ENCODE measurements at regions of chr12 and their contacts with region 1.

Region 1: GRCh38 chr12:642633-643474 is 20.4 kb downstream of the NINJ2 start:
- DNase-seq: peak; percentile 64 to 86 (median 80)
- ATAC-seq: peak; percentile 88
- H3K4me3 ChIP-seq: peak overlapping the region; percentile 54
- H3K4me3 Mint-ChIP-seq: peak overlapping the region; percentile 78 to 92 (median 82)
- H3K27ac ChIP-seq: peak overlapping the region; percentile 91
- H3K27ac Mint-ChIP-seq: peak overlapping the region; percentile 85 to 98 (median 95)
- H3K4me1 ChIP-seq: peaks cover 20 to 30% of the 10 kb centered on the region in 2 donors
- H3K4me1 Mint-ChIP-seq: peaks cover 26 to 72% (median 60%) of the 10 kb centered on the region in 7 donors
- H3K27me3 ChIP-seq: no peaks in the 10 kb centered on the region
- H3K27me3 Mint-ChIP-seq: no peaks in the 10 kb centered on the region

Region 2: GRCh38 chr12:622416-622815 is 20.4 kb before region 1 on chr12:
- CTCF ChIA-PET with region 1: no interaction called
- POLR2A ChIA-PET with region 1: interaction called, 9 read pairs
- intact Hi-C with region 1: loop called in 1 of 2 experiments (anchors 2 kb)
- DNase-seq: no peak
- ATAC-seq: peak; percentile 58
- H3K4me3 ChIP-seq: no peak overlapping the region
- H3K4me3 Mint-ChIP-seq: peak overlapping the region; percentile 51 to 85 (median 63)
- H3K27ac ChIP-seq: no peak overlapping the region
- H3K27ac Mint-ChIP-seq: peak overlapping the region in 8 of 9 donors; percentile 56 to 96 (median 74)
- H3K4me1 ChIP-seq: peaks cover 0 to 20% of the 10 kb centered on the region in 2 donors
- H3K4me1 Mint-ChIP-seq: peaks cover 29 to 56% (median 51%) of the 10 kb centered on the region in 7 donors
- H3K27me3 ChIP-seq: no peaks in the 10 kb centered on the region
- H3K27me3 Mint-ChIP-seq: no peaks in the 10 kb centered on the region

Region 3: GRCh38 chr12:662566-663292 is 19.9 kb after region 1 on chr12:
- CTCF ChIA-PET with region 1: no interaction called
- POLR2A ChIA-PET with region 1: no interaction called
- intact Hi-C with region 1: loop called in 1 of 2 experiments (anchors 2 kb)
- DNase-seq: no peak
- ATAC-seq: peak; percentile 47
- H3K4me3 ChIP-seq: peak overlapping the region; percentile 35
- H3K4me3 Mint-ChIP-seq: peak overlapping the region; percentile 54 to 93 (median 82)
- H3K27ac ChIP-seq: peak overlapping the region; percentile 49
- H3K27ac Mint-ChIP-seq: peak overlapping the region in 8 of 9 donors; percentile 16 to 85 (median 74)
- H3K4me1 ChIP-seq: peaks cover 15 to 26% of the 10 kb centered on the region in 2 donors
- H3K4me1 Mint-ChIP-seq: peaks cover 35 to 58% (median 54%) of the 10 kb centered on the region in 7 donors
- H3K27me3 ChIP-seq: no peaks in the 10 kb centered on the region
- H3K27me3 Mint-ChIP-seq: peaks cover 0 to 2% (median 0%) of the 10 kb centered on the region in 5 donors

Region 4: GRCh38 chr12:685388-685787 is 42.5 kb after region 1 on chr12:
- CTCF ChIA-PET with region 1: no interaction called
- POLR2A ChIA-PET with region 1: interaction called, 3 read pairs
- intact Hi-C with region 1: loop called (anchors 1 kb)
- DNase-seq: peak; percentile 48 to 96 (median 94)
- ATAC-seq: peak; percentile 96
- H3K4me3 ChIP-seq: no peak overlapping the region
- H3K4me3 Mint-ChIP-seq: peak overlapping the region; percentile 30 to 78 (median 72)
- H3K27ac ChIP-seq: peak overlapping the region; percentile 81
- H3K27ac Mint-ChIP-seq: peak overlapping the region; percentile 90 to 99 (median 98)
- H3K4me1 ChIP-seq: peaks cover 23 to 31% of the 10 kb centered on the region in 2 donors
- H3K4me1 Mint-ChIP-seq: peaks cover 23 to 53% (median 48%) of the 10 kb centered on the region in 7 donors
- H3K27me3 ChIP-seq: no peaks in the 10 kb centered on the region
- H3K27me3 Mint-ChIP-seq: no peaks in the 10 kb centered on the region

Region 5: DNA sequence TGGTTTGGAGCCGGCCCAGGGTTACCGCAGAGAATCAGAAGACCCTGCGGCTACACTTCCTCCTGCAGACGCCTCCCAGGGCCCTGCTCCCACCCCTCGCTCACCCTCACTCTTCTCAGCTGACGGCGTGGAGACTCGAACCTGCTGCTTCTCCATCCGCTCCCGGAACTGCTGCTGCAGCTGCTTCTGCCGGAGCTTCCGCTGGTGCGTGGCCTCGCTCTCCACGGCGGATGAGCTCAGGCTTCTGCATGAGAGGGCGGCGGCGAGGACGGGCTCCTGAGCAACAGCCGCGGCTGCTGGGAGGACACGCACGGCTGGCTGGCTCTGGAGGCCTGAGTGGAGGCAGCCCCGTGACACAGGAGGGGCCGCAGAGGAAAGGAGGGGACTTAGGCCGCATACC is 273.4 kb after region 1 on chr12:
- CTCF ChIA-PET with region 1: no interaction called
- POLR2A ChIA-PET with region 1: no interaction called
- intact Hi-C with region 1: no loop called
- DNase-seq: peak in 8 of 9 donors; percentile 2 to 36 (median 26)
- ATAC-seq: peak; percentile 41
- H3K4me3 ChIP-seq: no peak overlapping the region
- H3K4me3 Mint-ChIP-seq: peak overlapping the region in 9 of 10 donors; percentile 52 to 77 (median 69)
- H3K27ac ChIP-seq: no peak overlapping the region
- H3K27ac Mint-ChIP-seq: peak overlapping the region; percentile 72 to 94 (median 86)
- H3K4me1 ChIP-seq: peaks cover 0 to 6% of the 10 kb centered on the region in 2 donors
- H3K4me1 Mint-ChIP-seq: peaks cover 19 to 45% (median 31%) of the 10 kb centered on the region in 7 donors
- H3K27me3 ChIP-seq: no peaks in the 10 kb centered on the region
- H3K27me3 Mint-ChIP-seq: no peaks in the 10 kb centered on the region